HCT116 (cell line): ENCODE measurements at regions of chr17 and their contacts with region 1.

Region 1: GRCh38 chr17:81018044-81018802 is 16.7 kb upstream of the BAIAP2 start:
- DNase-seq: no peak
- ATAC-seq: no peak
- H3K4me3 ChIP-seq: no peak overlapping the region
- H3K27ac ChIP-seq: no peak overlapping the region
- H3K4me1 ChIP-seq: peaks cover 6 to 8% of the 10 kb centered on the region in 2 experiments; a peak in 3 of 4 replicates
- H3K27me3 ChIP-seq: no peaks in the 10 kb centered on the region
- CTCF ChIP-seq: no peak
- POLR2A ChIP-seq: no peak
- RAD21 ChIP-seq: no peak

Region 2: DNA sequence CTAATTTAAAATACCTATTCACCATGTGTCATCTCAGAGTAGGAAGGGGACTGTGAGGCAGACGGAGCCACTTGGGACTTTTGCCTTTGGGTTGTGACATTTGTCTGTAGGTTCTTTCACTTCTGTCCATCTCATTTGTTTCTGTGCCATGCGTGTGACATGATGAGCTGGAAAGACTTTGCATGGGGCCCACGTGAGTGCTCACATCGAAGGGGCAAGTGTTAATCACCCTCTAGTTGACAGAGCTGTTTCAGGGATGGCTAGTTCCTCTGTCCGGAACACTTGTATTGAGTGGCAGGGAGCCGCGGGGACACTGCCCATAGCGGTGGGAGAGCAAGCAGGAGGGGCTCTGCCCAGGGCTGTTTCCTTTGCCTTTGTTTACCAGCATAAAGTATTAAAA is 361.6 kb before region 1 on chr17:
- CTCF ChIA-PET with region 1: no interaction called
- POLR2A ChIA-PET with region 1: no interaction called
- RAD21 ChIA-PET with region 1: no interaction called
- intact Hi-C with region 1: no loop called
- DNase-seq: no peak
- ATAC-seq: no peak
- H3K4me3 ChIP-seq: no peak overlapping the region
- H3K27ac ChIP-seq: no peak overlapping the region
- H3K4me1 ChIP-seq: no peaks in the 10 kb centered on the region
- H3K27me3 ChIP-seq: no peaks in the 10 kb centered on the region
- CTCF ChIP-seq: no peak
- POLR2A ChIP-seq: no peak
- RAD21 ChIP-seq: no peak

Region 3: DNA sequence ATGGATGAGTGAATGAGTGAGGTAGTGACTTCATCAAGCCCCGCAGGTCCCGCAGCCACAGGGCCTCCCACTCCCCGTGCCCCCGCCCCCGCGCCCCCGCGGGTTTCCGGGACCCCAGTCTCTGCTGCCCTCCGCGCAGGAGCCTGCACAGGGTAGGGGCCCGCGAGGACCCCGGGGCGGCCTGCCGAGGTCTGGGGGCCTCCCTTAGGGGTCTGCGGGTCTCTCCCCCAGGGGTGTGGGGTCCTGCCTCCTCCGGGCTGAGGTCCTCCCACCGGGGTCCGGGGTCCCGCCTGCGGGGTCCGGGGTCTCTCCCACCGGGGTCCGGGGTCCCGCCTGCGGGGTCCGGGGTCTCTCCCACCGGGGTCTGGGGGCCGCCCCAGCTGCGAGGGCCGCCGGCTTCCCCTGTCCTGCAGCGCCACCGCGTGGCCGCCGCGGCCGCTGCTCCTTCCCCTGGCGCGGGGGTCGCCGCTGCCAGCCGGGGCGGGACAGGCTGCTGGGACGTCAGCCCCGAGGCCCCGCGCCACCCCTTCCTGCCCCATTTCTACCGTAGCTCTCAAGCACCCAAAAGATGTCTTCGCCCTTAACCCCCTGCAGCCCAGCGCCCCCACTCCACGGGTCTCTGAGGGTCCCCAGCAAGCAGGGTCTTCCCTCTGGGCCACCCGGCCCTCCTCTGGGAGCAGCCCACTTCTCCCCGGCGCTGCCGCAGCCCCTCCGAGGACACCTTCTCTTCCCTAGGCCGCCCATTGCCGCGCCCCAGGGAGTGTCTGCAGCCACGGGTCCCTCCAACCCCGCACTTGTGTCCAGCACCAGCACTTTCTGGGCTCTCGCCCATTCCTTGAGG is 36.9 kb before region 1 on chr17:
- CTCF ChIA-PET with region 1: no interaction called
- POLR2A ChIA-PET with region 1: no interaction called
- RAD21 ChIA-PET with region 1: no interaction called
- intact Hi-C with region 1: no loop called
- DNase-seq: no peak
- ATAC-seq: peak; percentile 57
- H3K4me3 ChIP-seq: no peak overlapping the region
- H3K27ac ChIP-seq: no peak overlapping the region; the same call in 1 of the 2 replicates
- H3K4me1 ChIP-seq: peaks cover 21 to 32% of the 10 kb centered on the region in 2 experiments
- H3K27me3 ChIP-seq: no peaks in the 10 kb centered on the region
- CTCF ChIP-seq: peak; percentile 59 to 95 (median 61)
- POLR2A ChIP-seq: no peak
- RAD21 ChIP-seq: peak; percentile 83

Region 4: GRCh38 chr17:81101614-81102306 is 83.5 kb after region 1 on chr17:
- CTCF ChIA-PET with region 1: interaction called, 34 read pairs
- POLR2A ChIA-PET with region 1: no interaction called
- RAD21 ChIA-PET with region 1: interaction called in 1 of 2 experiments, 3 read pairs
- intact Hi-C with region 1: loop called (anchors 1 kb)
- DNase-seq: peak; percentile 75
- ATAC-seq: peak; percentile 78
- H3K4me3 ChIP-seq: no peak overlapping the region
- H3K27ac ChIP-seq: peak overlapping the region; percentile 30; the same call in 1 of the 2 replicates
- H3K4me1 ChIP-seq: peaks cover 26 to 40% of the 10 kb centered on the region in 2 experiments
- H3K27me3 ChIP-seq: no peaks in the 10 kb centered on the region
- CTCF ChIP-seq: peak in 2 of 3 experiments; percentile 100; a peak in 4 of 6 replicates
- POLR2A ChIP-seq: no peak
- RAD21 ChIP-seq: no peak

Region 5: GRCh38 chr17:81200695-81201580 is 182.7 kb after region 1 on chr17:
- CTCF ChIA-PET with region 1: no interaction called
- POLR2A ChIA-PET with region 1: no interaction called
- RAD21 ChIA-PET with region 1: no interaction called
- intact Hi-C with region 1: no loop called
- DNase-seq: peak; percentile 54
- ATAC-seq: peak; percentile 94
- H3K4me3 ChIP-seq: no peak overlapping the region
- H3K27ac ChIP-seq: no peak overlapping the region; the same call in 1 of the 2 replicates
- H3K4me1 ChIP-seq: peaks cover 0 to 8% of the 10 kb centered on the region in 2 experiments; a peak in 1 of 4 replicates
- H3K27me3 ChIP-seq: no peaks in the 10 kb centered on the region
- CTCF ChIP-seq: peak; percentile 46 to 78 (median 69); a peak in 5 of 6 replicates
- POLR2A ChIP-seq: no peak
- RAD21 ChIP-seq: no peak; the same call in 1 of the 2 replicates